CD8-positive, alpha-beta T cell (primary cell): ENCODE measurements at regions of chr18 and their contacts with region 1.

Region 1: GRCh38 chr18:58761241-58761969 is 90.1 kb downstream of the MALT1 start:
- DNase-seq: no peak
- ATAC-seq: no peak
- H3K4me3 ChIP-seq: no peak overlapping the region
- H3K4me3 Mint-ChIP-seq: no peak overlapping the region
- H3K27ac ChIP-seq: no peak overlapping the region
- H3K27ac Mint-ChIP-seq: no peak overlapping the region
- H3K4me1 ChIP-seq: peaks cover 7% of the 10 kb centered on the region
- H3K4me1 Mint-ChIP-seq: peaks cover 39% of the 10 kb centered on the region
- H3K27me3 ChIP-seq: no peaks in the 10 kb centered on the region
- H3K27me3 Mint-ChIP-seq: peaks cover 16% of the 10 kb centered on the region
- CTCF ChIP-seq: no peak

Region 2: GRCh38 chr18:58520969-58521368 is 240.4 kb before region 1 on chr18:
- CTCF ChIA-PET with region 1: interaction called, 606 read pairs
- POLR2A ChIA-PET with region 1: no interaction called
- intact Hi-C with region 1: no loop called
- DNase-seq: peak in 1 of 9 experiments; percentile 39
- ATAC-seq: no peak
- H3K4me3 ChIP-seq: no peak overlapping the region
- H3K4me3 Mint-ChIP-seq: no peak overlapping the region
- H3K27ac ChIP-seq: no peak overlapping the region
- H3K27ac Mint-ChIP-seq: no peak overlapping the region
- H3K4me1 ChIP-seq: no peaks in the 10 kb centered on the region
- H3K4me1 Mint-ChIP-seq: no peaks in the 10 kb centered on the region
- H3K27me3 ChIP-seq: no peaks in the 10 kb centered on the region
- H3K27me3 Mint-ChIP-seq: peaks cover 15% of the 10 kb centered on the region
- CTCF ChIP-seq: no peak

Region 3: GRCh38 chr18:58529714-58530354 is 231.6 kb before region 1 on chr18:
- CTCF ChIA-PET with region 1: interaction called, 606 read pairs
- POLR2A ChIA-PET with region 1: interaction called, 29 read pairs
- intact Hi-C with region 1: loop called (anchors 1 kb)
- DNase-seq: peak; percentile 40 to 82 (median 72)
- ATAC-seq: peak; percentile 95
- H3K4me3 ChIP-seq: no peak overlapping the region
- H3K4me3 Mint-ChIP-seq: no peak overlapping the region
- H3K27ac ChIP-seq: no peak overlapping the region
- H3K27ac Mint-ChIP-seq: no peak overlapping the region
- H3K4me1 ChIP-seq: no peaks in the 10 kb centered on the region
- H3K4me1 Mint-ChIP-seq: peaks cover 4% of the 10 kb centered on the region
- H3K27me3 ChIP-seq: no peaks in the 10 kb centered on the region
- H3K27me3 Mint-ChIP-seq: peaks cover 7% of the 10 kb centered on the region
- CTCF ChIP-seq: peak; percentile 95

Region 4: DNA sequence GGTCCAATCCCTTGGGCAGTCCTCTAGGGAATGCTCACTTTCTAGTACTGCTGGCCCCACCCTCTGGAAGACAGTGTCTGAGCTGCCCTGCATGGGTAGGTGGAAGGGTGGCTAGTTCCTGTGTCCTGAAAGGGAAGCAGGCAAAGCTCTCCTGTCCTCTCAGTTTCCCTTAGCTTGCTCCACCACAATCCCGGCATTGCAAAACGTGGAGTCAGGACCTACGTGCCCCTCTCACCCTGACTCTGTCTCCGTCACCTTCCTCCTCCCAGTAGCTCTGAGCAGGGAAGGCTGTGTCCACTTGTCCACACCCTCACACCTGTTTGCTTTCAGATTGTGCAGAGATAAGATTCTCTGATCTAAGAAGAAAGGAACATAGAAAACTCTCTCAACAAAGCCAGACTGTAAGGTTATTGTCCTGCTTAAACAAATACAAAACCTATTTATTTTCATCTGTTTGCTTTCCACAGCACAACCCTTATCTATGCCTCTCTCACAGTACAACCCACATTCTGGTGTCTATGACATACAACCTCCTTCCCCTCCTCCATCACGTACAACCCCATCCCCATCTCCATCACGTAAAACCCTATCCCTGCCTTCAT is 211.6 kb before region 1 on chr18:
- CTCF ChIA-PET with region 1: interaction called, 606 read pairs
- POLR2A ChIA-PET with region 1: no interaction called
- intact Hi-C with region 1: no loop called
- DNase-seq: no peak
- ATAC-seq: no peak
- H3K4me3 ChIP-seq: no peak overlapping the region
- H3K4me3 Mint-ChIP-seq: no peak overlapping the region
- H3K27ac ChIP-seq: no peak overlapping the region
- H3K27ac Mint-ChIP-seq: no peak overlapping the region
- H3K4me1 ChIP-seq: no peaks in the 10 kb centered on the region
- H3K4me1 Mint-ChIP-seq: peaks cover 5% of the 10 kb centered on the region
- H3K27me3 ChIP-seq: no peaks in the 10 kb centered on the region
- H3K27me3 Mint-ChIP-seq: no peaks in the 10 kb centered on the region
- CTCF ChIP-seq: no peak

Region 5: GRCh38 chr18:58556331-58557007 is 204.9 kb before region 1 on chr18:
- CTCF ChIA-PET with region 1: interaction called, 10 read pairs
- POLR2A ChIA-PET with region 1: no interaction called
- intact Hi-C with region 1: no loop called
- DNase-seq: no peak
- ATAC-seq: no peak
- H3K4me3 ChIP-seq: no peak overlapping the region
- H3K4me3 Mint-ChIP-seq: no peak overlapping the region
- H3K27ac ChIP-seq: no peak overlapping the region
- H3K27ac Mint-ChIP-seq: no peak overlapping the region
- H3K4me1 ChIP-seq: no peaks in the 10 kb centered on the region
- H3K4me1 Mint-ChIP-seq: no peaks in the 10 kb centered on the region
- H3K27me3 ChIP-seq: no peaks in the 10 kb centered on the region
- H3K27me3 Mint-ChIP-seq: no peaks in the 10 kb centered on the region
- CTCF ChIP-seq: no peak

Region 6: DNA sequence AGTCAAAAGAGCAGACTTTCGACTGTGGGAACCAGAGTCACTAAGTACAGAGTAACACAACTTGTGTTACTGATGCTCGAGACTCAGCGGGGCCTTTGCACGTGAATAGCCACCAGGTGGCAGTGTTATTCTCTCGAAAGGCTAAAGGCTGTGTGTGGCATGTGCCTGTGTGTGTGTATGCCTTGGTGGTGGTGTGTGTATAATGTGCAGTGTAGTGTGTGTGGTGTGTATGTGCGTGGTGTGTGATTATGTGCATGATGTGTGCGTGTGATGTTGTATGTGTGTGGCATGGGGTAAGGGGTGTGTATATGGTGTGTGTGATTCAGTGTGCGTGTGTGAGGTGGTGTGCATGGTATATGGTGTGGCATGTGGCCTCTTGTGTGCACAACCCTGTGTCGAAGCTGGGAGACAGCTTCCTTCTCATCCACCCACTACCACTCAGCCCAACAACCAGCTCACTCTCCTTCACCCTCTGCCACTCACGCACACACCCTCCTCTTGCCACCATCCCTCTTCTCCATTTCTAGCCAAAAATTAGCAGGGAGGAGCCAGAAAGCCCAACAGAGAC is 20.3 kb after region 1 on chr18:
- CTCF ChIA-PET with region 1: interaction called, 11 read pairs
- POLR2A ChIA-PET with region 1: no interaction called
- intact Hi-C with region 1: no loop called
- DNase-seq: peak; percentile 25 to 76 (median 59)
- ATAC-seq: peak; percentile 61
- H3K4me3 ChIP-seq: no peak overlapping the region
- H3K4me3 Mint-ChIP-seq: no peak overlapping the region
- H3K27ac ChIP-seq: no peak overlapping the region
- H3K27ac Mint-ChIP-seq: no peak overlapping the region
- H3K4me1 ChIP-seq: no peaks in the 10 kb centered on the region
- H3K4me1 Mint-ChIP-seq: no peaks in the 10 kb centered on the region
- H3K27me3 ChIP-seq: peaks cover 0 to 2% of the 10 kb centered on the region in 2 experiments
- H3K27me3 Mint-ChIP-seq: peaks cover 32% of the 10 kb centered on the region
- CTCF ChIP-seq: peak; percentile 76